ENCODE measurements at regions of chr3 and their contacts with region 1.

Region 1: GRCh38 chr3:94069194-94069813 is 6.4 kb downstream of the NSUN3 start:
- DNase-seq: no peak
- H3K4me3 ChIP-seq: no peak overlapping the region
- H3K27ac ChIP-seq: no peak overlapping the region
- H3K4me1 ChIP-seq: peaks cover 0 to 11% of the 10 kb centered on the region in 2 donors
- H3K27me3 ChIP-seq: no peaks in the 10 kb centered on the region
- CTCF ChIP-seq: peak; percentile 42 to 63 (median 56)

Region 2: DNA sequence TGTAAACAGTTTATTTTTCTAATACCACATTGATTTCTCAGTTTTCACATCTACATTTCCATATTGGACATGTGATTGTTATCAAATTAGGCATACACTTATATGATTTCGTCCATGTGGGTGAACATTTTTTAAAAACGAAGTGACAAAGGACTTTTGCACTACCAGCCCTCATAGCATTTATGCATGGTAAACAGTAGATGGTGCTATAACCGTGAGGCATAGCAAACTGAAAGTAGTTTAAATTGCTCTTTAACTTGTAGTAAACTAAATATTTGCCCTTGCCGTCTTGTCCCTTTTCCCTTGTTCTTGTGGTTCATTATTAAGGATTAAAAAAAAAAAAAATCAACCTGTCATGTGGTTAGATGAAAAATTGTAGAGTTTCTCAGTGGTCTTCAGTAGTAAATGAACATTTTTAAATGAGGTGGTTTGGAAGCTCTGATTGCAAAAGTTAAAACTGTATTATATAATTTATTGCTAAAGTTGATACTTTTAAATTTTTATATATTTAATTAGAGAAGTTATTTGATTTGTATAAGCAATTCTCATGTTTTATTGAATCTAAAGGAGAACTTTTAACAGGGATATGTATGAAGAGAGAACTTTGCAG is 64.9 kb before region 1 on chr3:
- intact Hi-C with region 1: loop called (anchors 1 kb)
- DNase-seq: no peak
- H3K4me3 ChIP-seq: peak overlapping the region; percentile 34 to 52
- H3K27ac ChIP-seq: no peak overlapping the region
- H3K4me1 ChIP-seq: peaks cover 0 to 12% of the 10 kb centered on the region in 2 donors
- H3K27me3 ChIP-seq: no peaks in the 10 kb centered on the region
- CTCF ChIP-seq: peak; percentile 53 to 83 (median 72)